Caco-2 (cell line): ENCODE measurements at regions of chr10 and their contacts with region 1.

Region 1: GRCh38 chr10:7787857-7788638 is at the starts of genes ATP5F1C and KIN:
- DNase-seq: peak; percentile 99
- H3K4me3 ChIP-seq: peak within 1 kb of the TSS; percentile 100
- H3K4me3 Mint-ChIP-seq: no peak within 1 kb of the TSS
- H3K27ac Mint-ChIP-seq: no peak within 1 kb of the TSS
- H3K4me1 ChIP-seq: peaks cover 8% of the 10 kb centered on the region; the same call in 1 of the 2 replicates
- H3K4me1 Mint-ChIP-seq: peaks cover 26% of the 10 kb centered on the region
- H3K27me3 ChIP-seq: no peaks in the 10 kb centered on the region
- H3K27me3 Mint-ChIP-seq: no peaks in the 10 kb centered on the region
- CTCF ChIP-seq: no peak
- total RNA-seq, gene ATP5F1C: 568 and 613 TPM in 2 replicates
- total RNA-seq, gene KIN: 27.8 and 27.9 TPM in 2 replicates

Region 2: GRCh38 chr10:7700577-7701125 is 87.4 kb before region 1 on chr10:
- CTCF ChIA-PET with region 1: no interaction called
- POLR2A ChIA-PET with region 1: interaction called, 5 read pairs
- intact Hi-C with region 1: loop called (anchors 5 kb)
- DNase-seq: peak; percentile 61 to 80
- H3K4me3 ChIP-seq: no peak overlapping the region
- H3K4me3 Mint-ChIP-seq: no peak overlapping the region
- H3K27ac Mint-ChIP-seq: peak overlapping the region; percentile 52
- H3K4me1 ChIP-seq: peaks cover 8% of the 10 kb centered on the region
- H3K4me1 Mint-ChIP-seq: no peaks in the 10 kb centered on the region
- H3K27me3 ChIP-seq: no peaks in the 10 kb centered on the region
- H3K27me3 Mint-ChIP-seq: no peaks in the 10 kb centered on the region
- CTCF ChIP-seq: no peak

Region 3: DNA sequence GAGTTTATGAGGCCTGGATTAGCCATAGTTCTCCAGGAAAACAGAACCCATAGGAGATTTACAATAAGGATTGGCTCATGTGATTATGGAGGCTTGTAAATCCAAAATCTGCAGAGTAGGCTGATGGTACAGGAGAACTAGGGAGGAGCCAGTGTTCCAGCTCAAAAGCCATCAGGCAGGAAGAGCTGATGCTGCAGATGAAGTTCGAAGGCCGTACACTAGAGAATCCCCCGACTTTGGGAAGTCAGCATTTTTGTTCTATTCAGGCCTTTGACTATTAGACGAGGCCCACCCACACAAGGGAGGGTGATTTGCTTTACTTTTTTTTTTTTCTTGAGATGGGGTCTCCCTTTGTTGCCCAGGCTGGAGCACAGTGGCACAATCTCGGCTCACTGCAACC is 37.8 kb before region 1 on chr10:
- CTCF ChIA-PET with region 1: no interaction called
- POLR2A ChIA-PET with region 1: no interaction called
- intact Hi-C with region 1: no loop called
- DNase-seq: no peak
- H3K4me3 ChIP-seq: no peak overlapping the region
- H3K4me3 Mint-ChIP-seq: no peak overlapping the region
- H3K27ac Mint-ChIP-seq: no peak overlapping the region
- H3K4me1 ChIP-seq: no peaks in the 10 kb centered on the region
- H3K4me1 Mint-ChIP-seq: no peaks in the 10 kb centered on the region
- H3K27me3 ChIP-seq: no peaks in the 10 kb centered on the region
- H3K27me3 Mint-ChIP-seq: no peaks in the 10 kb centered on the region
- CTCF ChIP-seq: no peak

Region 4: DNA sequence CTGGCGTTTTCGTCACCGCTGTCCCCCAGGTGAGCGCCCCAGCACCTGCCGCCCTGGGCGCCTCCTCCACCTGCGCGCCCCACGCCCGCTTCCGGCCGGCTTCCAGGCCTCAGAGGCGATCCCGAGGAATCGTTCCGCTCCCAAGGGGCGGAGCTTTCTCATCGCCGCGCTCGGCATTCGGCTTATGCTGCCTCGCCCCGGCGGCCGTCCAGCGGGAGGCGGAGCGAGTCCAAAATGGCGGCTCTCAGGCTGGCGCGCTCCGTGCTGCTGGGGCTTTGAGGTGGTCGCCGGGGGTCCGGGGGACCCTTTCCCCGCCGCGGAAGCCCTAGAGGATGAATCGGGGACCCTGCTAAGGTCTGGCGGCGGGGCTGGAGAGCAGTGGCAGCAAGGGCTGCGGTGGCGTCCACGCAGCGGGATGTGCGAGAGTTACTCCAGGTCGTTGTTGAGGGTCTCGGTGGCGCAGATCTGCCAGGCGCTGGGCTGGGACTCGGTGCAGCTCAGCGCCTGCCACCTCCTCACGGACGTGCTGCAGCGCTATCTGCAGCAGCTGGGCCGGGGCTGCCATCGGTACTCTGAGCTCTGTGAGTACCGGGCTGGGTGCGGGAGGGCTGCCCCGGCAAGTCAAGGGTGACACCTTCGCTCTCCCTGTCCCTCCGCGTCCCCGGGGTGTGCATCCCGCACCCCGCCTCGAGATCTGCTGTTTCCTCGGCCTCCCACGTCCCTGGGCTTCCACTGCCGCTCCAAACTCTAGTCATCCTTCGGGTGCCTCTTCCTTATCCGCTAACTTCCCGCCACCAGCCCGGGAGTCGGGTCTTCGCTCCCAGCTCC is 30.5 kb after region 1 on chr10 and contains the start of gene TAF3:
- CTCF ChIA-PET with region 1: interaction called, 4 read pairs
- POLR2A ChIA-PET with region 1: interaction called, 45 read pairs
- intact Hi-C with region 1: loop called (anchors 1 kb)
- DNase-seq: peak; percentile 94 to 99
- H3K4me3 ChIP-seq: peak within 1 kb of the TSS; percentile 95
- H3K4me3 Mint-ChIP-seq: peak within 1 kb of the TSS; percentile 84
- H3K27ac Mint-ChIP-seq: peak within 1 kb of the TSS; percentile 72
- H3K4me1 ChIP-seq: peaks cover 4% of the 10 kb centered on the region; the same call in 1 of the 2 replicates
- H3K4me1 Mint-ChIP-seq: peaks cover 8% of the 10 kb centered on the region
- H3K27me3 ChIP-seq: no peaks in the 10 kb centered on the region
- H3K27me3 Mint-ChIP-seq: no peaks in the 10 kb centered on the region
- CTCF ChIP-seq: no peak
- total RNA-seq, gene TAF3: 28.9 and 30.6 TPM in 2 replicates

Region 5: GRCh38 chr10:7857262-7857661 is 69.2 kb after region 1 on chr10:
- CTCF ChIA-PET with region 1: no interaction called
- POLR2A ChIA-PET with region 1: interaction called, 8 read pairs
- intact Hi-C with region 1: loop called (anchors 2 kb)
- DNase-seq: peak in 1 of 2 experiments; percentile 24
- H3K4me3 ChIP-seq: no peak overlapping the region
- H3K4me3 Mint-ChIP-seq: peak overlapping the region; percentile 60
- H3K27ac Mint-ChIP-seq: peak overlapping the region; percentile 81
- H3K4me1 ChIP-seq: peaks cover 62% of the 10 kb centered on the region
- H3K4me1 Mint-ChIP-seq: peaks cover 49% of the 10 kb centered on the region
- H3K27me3 ChIP-seq: no peaks in the 10 kb centered on the region
- H3K27me3 Mint-ChIP-seq: no peaks in the 10 kb centered on the region
- CTCF ChIP-seq: no peak

Region 6: DNA sequence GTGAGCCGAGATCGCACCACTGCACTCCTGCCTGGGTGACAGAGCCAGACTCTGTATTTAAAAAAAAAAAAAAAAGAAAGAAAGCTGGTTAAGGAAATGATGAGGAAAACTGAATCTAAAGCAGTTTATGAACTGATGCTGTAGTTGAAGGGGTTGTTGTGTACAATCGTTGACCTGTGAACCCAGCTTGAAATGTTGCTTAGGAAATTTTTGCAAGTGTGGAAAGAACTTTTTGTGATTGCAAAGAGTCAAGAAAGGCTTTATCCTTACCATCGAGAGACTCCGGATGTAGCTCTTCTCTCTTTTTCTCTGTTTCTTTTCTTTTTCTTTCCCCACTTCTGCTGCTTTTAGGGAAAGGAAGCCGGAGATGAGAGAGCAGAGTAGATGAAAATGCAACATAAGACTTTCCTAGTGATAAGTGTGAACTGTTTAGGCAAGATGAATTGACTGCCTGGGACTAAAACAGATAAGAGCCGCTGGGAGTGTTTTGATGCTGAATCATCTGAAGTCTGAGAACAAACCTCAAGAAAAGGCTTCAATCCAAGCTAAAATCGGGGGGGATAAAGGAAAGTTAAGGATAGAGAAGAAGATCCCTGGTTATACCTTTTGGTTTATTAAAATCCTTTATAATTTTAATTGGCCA is 99.2 kb after region 1 on chr10:
- CTCF ChIA-PET with region 1: no interaction called
- POLR2A ChIA-PET with region 1: no interaction called
- intact Hi-C with region 1: no loop called
- DNase-seq: no peak
- H3K4me3 ChIP-seq: no peak overlapping the region
- H3K4me3 Mint-ChIP-seq: no peak overlapping the region
- H3K27ac Mint-ChIP-seq: peak overlapping the region; percentile 58
- H3K4me1 ChIP-seq: peaks cover 22% of the 10 kb centered on the region
- H3K4me1 Mint-ChIP-seq: peaks cover 36% of the 10 kb centered on the region
- H3K27me3 ChIP-seq: no peaks in the 10 kb centered on the region
- H3K27me3 Mint-ChIP-seq: no peaks in the 10 kb centered on the region
- CTCF ChIP-seq: no peak

Region 7: GRCh38 chr10:7901256-7901655 is 113.2 kb after region 1 on chr10:
- CTCF ChIA-PET with region 1: no interaction called
- POLR2A ChIA-PET with region 1: no interaction called
- intact Hi-C with region 1: no loop called
- DNase-seq: no peak
- H3K4me3 ChIP-seq: no peak overlapping the region
- H3K4me3 Mint-ChIP-seq: no peak overlapping the region
- H3K27ac Mint-ChIP-seq: no peak overlapping the region
- H3K4me1 ChIP-seq: no peaks in the 10 kb centered on the region
- H3K4me1 Mint-ChIP-seq: peaks cover 11% of the 10 kb centered on the region
- H3K27me3 ChIP-seq: no peaks in the 10 kb centered on the region
- H3K27me3 Mint-ChIP-seq: no peaks in the 10 kb centered on the region
- CTCF ChIP-seq: no peak